Sciatic nerve (tissue), 2 donors: ENCODE measurements at regions of chr11 and their contacts with region 1.

Region 1: GRCh38 chr11:35285471-35285870 is 133.9 kb downstream of the SLC1A2 start:
- DNase-seq: no peak
- ATAC-seq: no peak

Region 2: DNA sequence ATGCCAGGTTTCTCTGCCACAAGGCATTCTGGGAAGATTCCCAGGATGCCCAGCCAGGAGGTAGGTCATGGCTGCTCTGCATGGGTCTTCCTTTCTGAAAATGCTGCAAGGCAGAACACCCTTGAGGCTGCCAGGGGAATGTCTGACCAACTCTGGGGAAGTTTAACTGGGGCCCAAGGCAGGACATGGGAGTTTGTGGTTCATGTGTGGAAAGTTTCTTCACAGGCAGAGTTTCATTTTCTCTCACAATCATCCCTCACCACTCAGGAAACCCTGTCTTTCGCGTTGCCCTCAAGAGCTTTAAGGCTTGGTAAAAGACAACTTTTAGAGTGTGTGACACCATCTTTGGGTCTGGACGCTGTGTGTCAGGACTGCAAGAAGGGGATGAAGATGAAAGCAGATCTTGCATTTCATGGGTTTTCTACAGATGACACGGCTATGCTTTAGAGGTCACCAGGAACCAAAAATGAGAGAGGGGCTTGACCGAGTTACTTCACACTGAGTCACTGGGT is 13.0 kb before region 1 on chr11:
- intact Hi-C with region 1: no loop called
- DNase-seq: no peak
- ATAC-seq: no peak

Region 3: GRCh38 chr11:35344681-35345574 is 59.5 kb after region 1 on chr11:
- intact Hi-C with region 1: loop called (anchors 2 kb)
- DNase-seq: no peak
- ATAC-seq: peak; percentile 51

Region 4: GRCh38 chr11:35391922-35392813 is 106.7 kb after region 1 on chr11:
- intact Hi-C with region 1: no loop called
- DNase-seq: peak; percentile 93
- ATAC-seq: peak; percentile 96

Region 5: DNA sequence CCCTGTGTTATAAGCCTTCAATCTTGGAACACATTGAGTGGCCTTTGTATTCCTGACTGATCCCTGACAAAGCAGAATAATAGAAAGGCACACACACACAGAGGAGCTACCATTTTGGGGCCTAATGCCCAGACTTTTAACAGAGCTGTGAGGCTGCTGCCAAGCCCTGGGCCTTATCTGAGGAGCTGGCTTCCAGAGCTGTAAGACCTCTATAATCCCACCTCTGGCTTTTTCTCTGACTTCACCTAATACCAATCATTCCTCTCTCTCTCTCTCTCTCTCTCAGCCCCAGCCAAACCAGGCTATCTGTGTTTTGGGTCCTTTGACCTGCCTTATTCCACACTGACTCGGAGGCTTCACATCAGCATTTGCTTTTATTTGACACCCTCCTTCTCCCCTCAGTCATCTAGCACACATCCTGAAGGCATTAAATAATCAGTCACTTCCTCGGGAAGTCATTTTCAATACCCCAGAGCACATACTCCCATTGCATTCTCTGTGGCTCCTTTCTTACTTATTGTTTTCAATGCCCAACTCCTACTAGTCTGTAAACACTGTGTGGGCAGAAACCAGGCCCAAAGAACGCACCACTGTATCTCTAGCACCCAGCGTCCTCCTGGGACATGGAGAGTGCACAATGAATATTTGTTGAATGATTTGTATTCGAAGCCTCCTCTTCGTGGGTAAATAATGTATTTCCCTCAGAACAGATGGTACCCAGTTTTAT is 355.9 kb after region 1 on chr11:
- intact Hi-C with region 1: no loop called
- DNase-seq: no peak
- ATAC-seq: peak; percentile 46